ENCODE measurements at regions of chr7 and their contacts with region 1.

Region 1: DNA sequence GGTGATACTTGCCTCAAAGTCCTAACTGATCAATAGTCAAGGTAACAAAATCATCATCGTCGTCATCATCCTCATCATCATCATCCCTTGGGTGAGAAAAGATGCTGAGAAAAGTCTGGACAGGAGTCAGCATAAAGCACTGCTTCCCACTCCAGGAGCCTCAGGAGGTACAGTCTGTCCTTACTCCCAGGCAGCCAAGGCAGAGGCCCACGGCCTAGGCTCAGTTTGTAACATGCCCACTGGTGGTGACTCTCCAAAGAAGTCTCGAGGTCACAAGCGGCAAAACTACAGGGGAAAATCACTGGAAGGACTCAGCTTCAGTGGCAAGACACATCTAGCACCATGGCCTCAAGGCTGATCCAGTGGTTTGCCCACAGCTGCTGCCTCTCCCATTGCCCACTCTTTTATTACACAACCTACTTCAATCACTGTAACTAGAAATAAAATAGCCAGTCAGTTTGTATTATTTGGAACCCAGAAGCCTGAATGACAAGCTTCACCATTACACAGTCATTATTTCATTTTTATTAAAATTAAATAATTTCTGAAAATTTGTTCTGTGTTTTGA is 150.4 kb downstream of the SRPK2 start:
- DNase-seq: no peak
- H3K4me3 Mint-ChIP-seq: no peak overlapping the region
- H3K27ac Mint-ChIP-seq: no peak overlapping the region
- H3K4me1 Mint-ChIP-seq: peaks cover 20% of the 10 kb centered on the region
- H3K27me3 Mint-ChIP-seq: no peaks in the 10 kb centered on the region
- CTCF ChIP-seq: no peak

Region 2: DNA sequence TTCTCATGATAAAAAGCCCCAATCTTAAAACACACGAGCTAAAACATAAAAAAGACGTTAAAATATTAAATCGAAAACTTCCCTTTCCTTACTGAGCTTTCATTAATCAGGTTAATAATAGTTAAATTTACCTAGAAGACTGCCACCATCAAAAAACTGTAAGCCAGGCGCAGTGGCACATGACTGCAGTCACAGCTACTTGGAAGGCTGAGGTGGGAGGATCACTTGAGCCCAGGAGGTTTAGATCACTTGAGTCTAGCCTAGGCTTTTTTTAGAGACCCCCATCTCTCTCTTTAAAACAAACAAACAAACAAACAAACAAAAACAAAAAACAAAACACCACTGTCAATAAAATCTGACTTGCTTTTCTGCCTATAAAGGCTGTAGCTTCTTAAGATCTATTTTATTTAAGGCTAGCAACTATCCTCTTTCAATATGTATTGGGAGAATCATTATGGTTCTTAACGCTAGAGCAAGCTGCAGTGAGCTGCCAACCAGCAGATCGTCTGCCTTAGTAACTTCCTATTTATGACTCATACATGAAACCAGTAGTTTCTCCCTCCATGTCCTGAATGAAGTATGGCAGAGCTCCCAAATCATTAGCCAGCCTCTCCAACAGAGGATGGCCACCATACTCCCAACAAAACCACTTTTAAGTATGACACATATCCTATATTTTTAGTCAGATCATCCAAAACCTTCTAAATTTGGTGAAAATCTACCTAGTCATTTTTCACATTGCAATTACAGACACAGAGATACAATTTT is 13.2 kb before region 1 on chr7:
- CTCF ChIA-PET with region 1: interaction called, 3 read pairs
- POLR2A ChIA-PET with region 1: interaction called, 10 read pairs
- intact Hi-C with region 1: no loop called
- DNase-seq: peak; percentile 91
- H3K4me3 Mint-ChIP-seq: peak overlapping the region; percentile 65
- H3K27ac Mint-ChIP-seq: peak overlapping the region; percentile 95
- H3K4me1 Mint-ChIP-seq: peaks cover 31% of the 10 kb centered on the region
- H3K27me3 Mint-ChIP-seq: no peaks in the 10 kb centered on the region
- CTCF ChIP-seq: no peak